MCF 10A (cell line): ENCODE measurements at regions of chr17 and their contacts with region 1.

Region 1: DNA sequence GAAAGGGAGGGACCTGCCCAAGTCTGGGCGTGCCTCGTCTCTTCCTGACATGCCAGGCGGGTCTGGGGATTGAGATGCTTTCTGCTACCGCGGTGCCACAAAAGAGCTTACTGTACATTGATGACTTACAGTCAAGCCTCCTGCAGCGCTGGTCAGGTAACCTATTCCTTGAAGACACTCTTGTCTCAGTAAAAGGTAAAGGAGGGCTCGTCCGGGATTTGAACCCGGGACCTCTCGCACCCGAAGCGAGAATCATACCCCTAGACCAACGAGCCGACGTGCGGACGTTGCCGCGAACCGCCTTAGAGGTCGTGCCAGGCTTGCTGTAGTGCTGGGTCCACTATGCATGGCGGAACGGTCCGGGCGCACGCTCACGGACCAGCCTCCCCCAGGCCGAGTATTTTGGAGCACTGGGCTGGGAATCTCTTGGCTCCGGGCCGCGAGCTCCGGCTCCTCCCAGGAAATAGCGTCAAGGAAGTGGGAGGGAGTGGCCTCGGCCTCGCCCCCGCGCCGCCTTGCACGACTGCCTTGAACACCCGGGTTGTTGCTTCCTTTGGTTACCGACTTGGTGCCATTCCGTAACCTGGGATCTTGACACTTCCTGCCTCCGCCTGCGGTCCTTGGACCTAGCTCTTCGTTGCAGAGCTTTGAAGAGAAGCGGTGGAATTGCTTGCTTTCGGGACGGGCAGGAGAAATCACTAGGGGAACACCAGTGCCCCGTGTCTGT is 12.4 kb upstream of the AURKB start:
- DNase-seq: peak; percentile 94
- H3K4me3 Mint-ChIP-seq: peak overlapping the region; percentile 93
- H3K27ac Mint-ChIP-seq: peak overlapping the region; percentile 97
- H3K4me1 Mint-ChIP-seq: peaks cover 18% of the 10 kb centered on the region
- H3K27me3 Mint-ChIP-seq: no peaks in the 10 kb centered on the region
- CTCF ChIP-seq: no peak

Region 2: GRCh38 chr17:8138672-8139371 is 84.0 kb before region 1 on chr17:
- CTCF ChIA-PET with region 1: interaction called, 3 read pairs
- POLR2A ChIA-PET with region 1: interaction called, 13 read pairs
- intact Hi-C with region 1: no loop called
- DNase-seq: peak; percentile 95
- H3K4me3 Mint-ChIP-seq: no peak overlapping the region
- H3K27ac Mint-ChIP-seq: no peak overlapping the region
- H3K4me1 Mint-ChIP-seq: peaks cover 11% of the 10 kb centered on the region
- H3K27me3 Mint-ChIP-seq: no peaks in the 10 kb centered on the region
- CTCF ChIP-seq: peak; percentile 71

Region 3: GRCh38 chr17:8173056-8173870 is 49.5 kb before region 1 on chr17:
- CTCF ChIA-PET with region 1: no interaction called
- POLR2A ChIA-PET with region 1: interaction called, 33 read pairs
- intact Hi-C with region 1: no loop called
- DNase-seq: peak; percentile 99
- H3K4me3 Mint-ChIP-seq: peak overlapping the region; percentile 91
- H3K27ac Mint-ChIP-seq: peak overlapping the region; percentile 100
- H3K4me1 Mint-ChIP-seq: peaks cover 27% of the 10 kb centered on the region
- H3K27me3 Mint-ChIP-seq: no peaks in the 10 kb centered on the region
- CTCF ChIP-seq: no peak

Region 4: GRCh38 chr17:8204761-8205555 is 17.8 kb before region 1 on chr17:
- CTCF ChIA-PET with region 1: interaction called, 6 read pairs
- POLR2A ChIA-PET with region 1: interaction called, 72 read pairs
- intact Hi-C with region 1: no loop called
- DNase-seq: no peak
- H3K4me3 Mint-ChIP-seq: no peak overlapping the region
- H3K27ac Mint-ChIP-seq: no peak overlapping the region
- H3K4me1 Mint-ChIP-seq: no peaks in the 10 kb centered on the region
- H3K27me3 Mint-ChIP-seq: no peaks in the 10 kb centered on the region
- CTCF ChIP-seq: no peak

Region 5: DNA sequence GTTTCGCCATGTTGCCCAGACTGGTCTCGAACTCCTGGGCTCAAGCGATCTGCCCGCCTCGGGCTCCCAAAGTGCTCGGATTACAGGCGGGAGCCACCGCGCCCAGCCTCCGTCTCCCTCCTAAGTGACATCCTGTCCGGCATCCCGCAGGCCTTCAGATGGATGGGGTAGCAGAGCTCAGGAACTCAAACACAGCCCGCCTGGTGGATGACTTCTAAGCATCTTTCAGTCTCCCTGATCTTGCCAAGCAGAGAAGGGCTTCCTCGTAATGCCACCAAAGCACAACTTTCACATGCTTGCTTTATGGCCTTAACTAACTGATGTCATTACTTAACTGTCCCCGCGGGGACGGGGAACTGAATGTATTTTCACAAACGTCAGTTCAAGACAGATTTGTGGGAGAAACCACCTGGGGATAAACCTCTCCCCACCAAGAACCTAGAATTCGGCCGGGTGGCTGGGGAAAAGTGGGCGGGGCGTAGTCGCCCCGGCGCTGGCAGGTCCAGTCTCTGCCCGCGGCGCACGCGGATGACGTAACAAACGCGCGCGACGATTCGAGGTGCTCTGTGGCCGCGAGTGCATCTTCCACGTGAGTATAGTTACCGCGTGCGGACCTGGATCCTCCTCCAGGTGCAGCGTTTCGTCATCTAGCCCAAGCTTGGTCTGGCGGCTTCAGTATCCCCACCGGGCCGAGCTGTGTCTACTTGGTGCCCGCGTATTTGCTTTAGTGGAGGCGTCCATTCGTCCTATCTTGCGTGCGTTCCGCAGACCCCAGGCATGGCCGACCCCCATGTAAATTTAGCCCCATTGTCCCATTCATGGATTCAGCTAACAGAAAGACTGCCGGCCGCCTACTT is 26.2 kb after region 1 on chr17 and contains the start of gene PFAS:
- CTCF ChIA-PET with region 1: interaction called, 4 read pairs
- POLR2A ChIA-PET with region 1: interaction called, 269 read pairs
- intact Hi-C with region 1: loop called (anchors 1 kb)
- DNase-seq: peak; percentile 92
- H3K4me3 Mint-ChIP-seq: peak within 1 kb of the TSS; percentile 98
- H3K27ac Mint-ChIP-seq: peak within 1 kb of the TSS; percentile 97
- H3K4me1 Mint-ChIP-seq: peaks cover 15% of the 10 kb centered on the region
- H3K27me3 Mint-ChIP-seq: no peaks in the 10 kb centered on the region
- CTCF ChIP-seq: no peak
- total RNA-seq, gene PFAS: 54.4 and 66.2 TPM in 2 replicates

Region 6: DNA sequence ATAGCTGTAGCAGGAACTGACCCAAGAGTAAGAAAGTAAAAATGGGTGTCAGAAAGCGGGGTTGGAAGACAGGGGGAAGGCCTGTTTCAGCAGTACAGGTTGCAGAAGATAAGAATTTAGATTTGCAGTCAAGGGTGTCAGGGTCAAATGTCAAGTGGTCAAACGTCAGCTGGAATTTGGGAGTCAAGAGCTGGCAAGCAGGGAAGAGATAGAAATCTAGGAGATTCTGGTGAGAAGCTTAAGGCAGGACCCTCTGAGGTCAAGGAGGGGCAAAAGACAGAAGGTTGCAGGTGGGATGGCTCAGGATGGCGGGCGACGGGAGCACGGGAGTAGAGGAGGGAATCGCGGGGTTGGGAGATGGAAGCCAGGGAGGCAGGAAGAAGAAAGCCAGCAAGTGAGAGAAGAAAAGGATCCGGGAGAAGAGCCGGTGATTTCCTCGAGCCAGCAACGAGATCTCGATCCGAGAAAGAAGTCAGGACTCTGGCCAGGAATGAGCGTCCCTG is 72.1 kb after region 1 on chr17:
- CTCF ChIA-PET with region 1: interaction called, 8 read pairs
- POLR2A ChIA-PET with region 1: interaction called, 24 read pairs
- intact Hi-C with region 1: loop called (anchors 1 kb)
- DNase-seq: no peak
- H3K4me3 Mint-ChIP-seq: peak overlapping the region; percentile 92
- H3K27ac Mint-ChIP-seq: peak overlapping the region; percentile 91
- H3K4me1 Mint-ChIP-seq: peaks cover 21% of the 10 kb centered on the region
- H3K27me3 Mint-ChIP-seq: no peaks in the 10 kb centered on the region
- CTCF ChIP-seq: no peak

Region 7: DNA sequence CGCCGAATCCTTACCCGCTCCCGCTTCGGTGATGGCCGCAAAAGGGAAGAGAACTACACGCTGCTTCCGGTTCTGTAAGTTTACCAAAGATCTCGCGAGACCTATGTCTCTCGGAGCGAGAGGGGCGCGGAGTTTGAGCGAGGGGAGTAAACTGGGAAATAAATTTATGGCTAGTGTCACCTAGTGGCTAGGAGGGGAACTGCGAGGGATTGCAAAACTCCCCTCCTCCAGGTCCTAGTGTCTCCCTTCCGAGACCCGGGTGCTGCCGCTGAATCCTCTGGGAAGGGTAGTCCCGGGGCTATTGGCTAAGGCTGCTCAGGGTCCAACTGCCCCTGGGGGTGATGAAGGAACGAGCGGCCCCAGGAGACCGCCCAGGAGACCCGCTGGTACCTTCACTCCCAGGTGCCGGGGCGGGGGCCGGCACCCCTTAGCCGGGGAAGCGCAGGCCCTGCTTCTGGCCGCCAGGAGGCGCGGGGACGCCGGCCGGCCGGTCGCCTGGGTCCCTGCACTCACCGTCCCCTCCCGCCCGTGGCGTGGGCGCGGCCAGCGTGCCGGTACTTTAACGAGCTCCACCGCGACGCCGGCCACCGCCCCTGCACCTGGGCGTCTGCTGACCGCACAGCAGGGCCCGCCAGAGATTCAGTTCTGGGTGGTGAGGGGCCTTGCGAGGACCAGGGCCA is 160.5 kb after region 1 on chr17 and contains the start of gene RPL26:
- CTCF ChIA-PET with region 1: no interaction called
- POLR2A ChIA-PET with region 1: interaction called, 11 read pairs
- intact Hi-C with region 1: loop called (anchors 5 kb)
- DNase-seq: peak; percentile 99
- H3K4me3 Mint-ChIP-seq: peak within 1 kb of the TSS; percentile 97
- H3K27ac Mint-ChIP-seq: peak within 1 kb of the TSS; percentile 100
- H3K4me1 Mint-ChIP-seq: peaks cover 21% of the 10 kb centered on the region
- H3K27me3 Mint-ChIP-seq: no peaks in the 10 kb centered on the region
- CTCF ChIP-seq: peak; percentile 81
- total RNA-seq, gene RPL26: 3,179 and 3,524 TPM in 2 replicates